GM12878 (cell line): ENCODE measurements at regions of chr10 and their contacts with region 1.

Region 1: DNA sequence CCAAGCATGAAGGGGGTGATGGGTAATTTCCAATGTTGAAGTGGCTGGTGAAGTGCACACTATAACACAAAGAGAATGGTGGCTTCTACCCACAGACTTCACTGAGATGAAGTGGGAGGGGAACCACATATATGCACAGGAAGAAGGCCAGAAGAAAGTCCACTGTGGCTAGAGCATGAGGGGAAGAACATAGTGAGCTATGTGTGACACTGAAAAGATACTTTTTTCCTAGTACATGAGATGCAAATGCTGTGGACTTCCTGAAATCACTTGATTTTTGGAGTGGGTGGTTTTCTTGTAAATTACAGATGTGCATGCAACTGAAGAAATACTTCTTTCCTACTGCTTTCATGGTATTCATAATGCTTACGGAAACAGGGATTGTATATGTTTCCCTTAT is 115.6 kb upstream of the PHYHIPL start:
- DNase-seq: peak; percentile 53
- ATAC-seq: peak; percentile 87
- H3K4me3 ChIP-seq: no peak overlapping the region
- H3K27ac ChIP-seq: no peak overlapping the region
- H3K4me1 ChIP-seq: peaks cover 7% of the 10 kb centered on the region
- H3K27me3 ChIP-seq: no peaks in the 10 kb centered on the region
- CTCF ChIP-seq: no peak
- EP300 ChIP-seq: peak; percentile 27 to 67; a peak in 3 of 4 replicates
- POLR2A ChIP-seq: no peak
- RAD21 ChIP-seq: no peak; the same call in 1 of the 2 replicates

Region 2: DNA sequence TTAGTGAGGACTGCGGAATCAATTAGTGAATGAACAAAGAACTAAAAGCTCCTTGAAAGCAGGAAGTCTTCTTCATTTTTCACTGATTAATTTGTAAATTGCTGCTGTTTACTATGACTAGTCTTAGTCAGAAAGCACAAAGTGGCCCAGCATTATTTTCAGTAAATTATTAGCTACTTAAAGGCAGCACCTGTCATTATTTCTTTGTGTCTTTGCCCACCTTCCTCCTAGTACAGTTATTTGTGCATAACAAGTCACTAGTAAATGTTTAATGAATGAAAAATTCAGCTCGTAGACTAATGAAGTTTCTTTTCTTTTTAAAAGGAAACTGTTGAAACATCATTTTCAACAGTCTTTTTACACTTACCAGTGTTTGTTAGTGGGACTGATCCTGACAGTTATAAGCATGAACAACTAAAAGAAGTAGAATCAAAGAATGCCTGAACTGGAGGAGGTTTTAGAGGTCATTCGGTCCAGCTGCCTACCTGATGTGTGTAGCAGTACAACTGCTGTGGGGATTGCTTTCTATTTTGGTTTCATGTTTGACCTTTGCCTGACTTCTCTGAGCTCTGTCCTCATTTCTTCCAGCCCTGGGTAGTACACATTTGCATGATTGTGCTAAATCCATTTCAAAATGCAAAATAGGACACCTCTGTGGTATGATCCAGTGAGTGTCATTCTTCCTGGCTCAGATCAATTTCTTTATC is 24.4 kb before region 1 on chr10:
- CTCF ChIA-PET with region 1: no interaction called
- POLR2A ChIA-PET with region 1: interaction called, 3 read pairs
- RAD21 ChIA-PET with region 1: interaction called, 5 read pairs
- SMC1A ChIA-PET with region 1: interaction called, 12 read pairs
- in situ Hi-C with region 1: no loop called
- intact Hi-C with region 1: no loop called
- DNase-seq: peak; percentile 55
- ATAC-seq: peak; percentile 99
- H3K4me3 ChIP-seq: 0 out of 2 replicates have a peak overlapping the region, but pooled peaks have one; percentile 20
- H3K27ac ChIP-seq: peak overlapping the region; percentile 39; the same call in 1 of the 2 replicates
- H3K4me1 ChIP-seq: peaks cover 13% of the 10 kb centered on the region
- H3K27me3 ChIP-seq: no peaks in the 10 kb centered on the region
- CTCF ChIP-seq: no peak
- EP300 ChIP-seq: peak in 1 of 2 experiments; percentile 71; a peak in 3 of 4 replicates
- POLR2A ChIP-seq: no peak
- RAD21 ChIP-seq: no peak

Region 3: GRCh38 chr10:59079386-59080226 is 18.8 kb after region 1 on chr10:
- CTCF ChIA-PET with region 1: interaction called, 3 read pairs
- POLR2A ChIA-PET with region 1: interaction called, 3 read pairs
- RAD21 ChIA-PET with region 1: interaction called, 6 read pairs
- SMC1A ChIA-PET with region 1: interaction called, 94 read pairs
- in situ Hi-C with region 1: no loop called
- intact Hi-C with region 1: no loop called
- DNase-seq: no peak
- ATAC-seq: no peak
- H3K4me3 ChIP-seq: no peak overlapping the region
- H3K27ac ChIP-seq: no peak overlapping the region
- H3K4me1 ChIP-seq: 0 out of 2 replicates have a peak, but pooled peaks cover 3% of the 10 kb centered on the region
- H3K27me3 ChIP-seq: no peaks in the 10 kb centered on the region
- CTCF ChIP-seq: no peak
- EP300 ChIP-seq: no peak
- POLR2A ChIP-seq: no peak
- RAD21 ChIP-seq: no peak

Region 4: DNA sequence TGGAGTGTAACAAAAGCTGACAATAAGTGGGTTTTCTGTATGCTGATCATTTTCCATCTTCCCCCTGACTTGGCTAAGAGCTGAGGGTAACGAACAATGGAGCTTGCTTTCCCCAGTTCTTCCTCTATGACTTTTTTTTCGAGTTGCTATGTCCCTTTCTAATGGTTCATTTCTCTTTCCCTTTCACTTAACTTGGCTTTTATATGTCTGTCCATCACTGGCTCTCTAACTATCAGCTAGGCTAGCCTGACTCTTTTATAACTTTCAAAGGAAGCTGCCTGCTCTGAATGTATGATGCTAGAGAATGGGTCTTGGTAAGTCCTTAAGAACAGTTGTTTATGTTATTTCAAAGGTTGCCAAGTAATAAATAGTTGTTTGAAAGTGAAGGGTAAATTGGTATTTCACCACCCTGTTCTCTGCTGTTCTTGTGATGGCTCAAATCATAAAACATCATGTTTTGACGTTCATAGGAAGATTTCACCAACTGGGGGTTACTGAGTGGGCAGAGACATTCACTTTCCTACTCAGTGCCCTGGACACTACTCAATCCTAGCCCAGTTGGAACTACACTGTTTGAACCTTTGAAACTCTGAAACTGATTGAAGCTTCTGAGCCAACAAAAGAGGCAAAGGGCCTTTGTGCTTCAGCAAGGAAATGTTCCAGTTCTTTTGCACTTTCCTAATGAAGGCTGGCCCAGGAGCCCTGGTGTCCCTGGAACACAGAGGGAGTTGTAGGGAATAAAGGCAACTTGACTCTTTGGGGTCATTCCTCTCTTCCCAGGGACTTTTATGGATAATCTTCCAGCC is 30.2 kb after region 1 on chr10:
- CTCF ChIA-PET with region 1: interaction called, 4 read pairs
- POLR2A ChIA-PET with region 1: interaction called, 4 read pairs
- RAD21 ChIA-PET with region 1: interaction called, 7 read pairs
- SMC1A ChIA-PET with region 1: interaction called, 62 read pairs
- in situ Hi-C with region 1: no loop called
- intact Hi-C with region 1: no loop called
- DNase-seq: no peak
- ATAC-seq: no peak; the same call in 1 of the 3 replicates
- H3K4me3 ChIP-seq: no peak overlapping the region
- H3K27ac ChIP-seq: no peak overlapping the region
- H3K4me1 ChIP-seq: no peaks in the 10 kb centered on the region
- H3K27me3 ChIP-seq: no peaks in the 10 kb centered on the region
- CTCF ChIP-seq: no peak
- EP300 ChIP-seq: no peak
- POLR2A ChIP-seq: no peak
- RAD21 ChIP-seq: no peak

Region 5: GRCh38 chr10:59107147-59107546 is 46.3 kb after region 1 on chr10:
- CTCF ChIA-PET with region 1: interaction called, 5 read pairs
- POLR2A ChIA-PET with region 1: interaction called, 5 read pairs
- RAD21 ChIA-PET with region 1: interaction called, 20 read pairs
- SMC1A ChIA-PET with region 1: interaction called, 106 read pairs
- in situ Hi-C with region 1: no loop called
- intact Hi-C with region 1: no loop called
- DNase-seq: peak; percentile 26
- ATAC-seq: peak; percentile 78
- H3K4me3 ChIP-seq: no peak overlapping the region
- H3K27ac ChIP-seq: no peak overlapping the region
- H3K4me1 ChIP-seq: no peaks in the 10 kb centered on the region
- H3K27me3 ChIP-seq: no peaks in the 10 kb centered on the region
- CTCF ChIP-seq: no peak
- EP300 ChIP-seq: no peak
- POLR2A ChIP-seq: no peak
- RAD21 ChIP-seq: no peak